ENCODE measurements at regions of chr1 and their contacts with region 1.

Region 1: GRCh38 chr1:6041432-6042062 is 4.1 kb upstream of the KCNAB2 start:
- DNase-seq: peak in 1 of 2 donors; percentile 39
- ATAC-seq: peak in 1 of 4 donors; percentile 45
- H3K4me3 ChIP-seq: no peak overlapping the region
- H3K27ac ChIP-seq: no peak overlapping the region
- H3K4me1 ChIP-seq: no peaks in the 10 kb centered on the region
- H3K27me3 ChIP-seq: peaks cover 0 to 29% (median 6%) of the 10 kb centered on the region in 3 donors
- CTCF ChIP-seq: peak; percentile 40

Region 2: DNA sequence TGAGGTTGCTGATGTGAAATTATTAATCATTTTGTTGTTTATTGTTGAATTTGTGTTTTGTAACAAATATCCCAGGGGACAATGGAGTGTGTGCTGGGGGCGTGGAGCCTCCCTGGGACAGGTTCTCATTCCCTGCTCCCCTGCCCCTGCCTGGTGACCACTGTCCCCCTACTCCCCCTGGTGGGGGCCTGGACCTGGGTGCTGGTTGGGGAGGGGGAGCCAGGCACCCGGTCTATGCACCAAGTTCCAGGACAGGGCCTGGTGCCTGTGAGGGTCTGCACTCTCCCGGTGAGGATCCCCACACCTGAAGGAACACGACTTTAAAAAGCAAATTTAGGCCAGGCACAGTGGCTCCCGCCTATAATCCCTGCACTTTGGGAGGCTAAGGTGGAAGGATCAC is 96.2 kb after region 1 on chr1:
- intact Hi-C with region 1: no loop called
- DNase-seq: peak in 1 of 2 donors; percentile 41
- ATAC-seq: no peak
- H3K4me3 ChIP-seq: no peak overlapping the region
- H3K27ac ChIP-seq: no peak overlapping the region
- H3K4me1 ChIP-seq: no peaks in the 10 kb centered on the region
- H3K27me3 ChIP-seq: peaks cover 0 to 21% (median 0%) of the 10 kb centered on the region in 3 donors
- CTCF ChIP-seq: no peak

Region 3: GRCh38 chr1:6171548-6172119 is 130.1 kb after region 1 on chr1:
- intact Hi-C with region 1: loop called in 1 of 2 experiments (anchors 10 kb)
- DNase-seq: no peak
- ATAC-seq: no peak
- H3K4me3 ChIP-seq: no peak overlapping the region
- H3K27ac ChIP-seq: no peak overlapping the region
- H3K4me1 ChIP-seq: no peaks in the 10 kb centered on the region
- H3K27me3 ChIP-seq: peaks cover 0 to 31% (median 19%) of the 10 kb centered on the region in 3 donors
- CTCF ChIP-seq: no peak

Measured in psoas muscle (tissue), 8 donors.